ENCODE measurements at regions of chr4 and their contacts with region 1.

Region 1: DNA sequence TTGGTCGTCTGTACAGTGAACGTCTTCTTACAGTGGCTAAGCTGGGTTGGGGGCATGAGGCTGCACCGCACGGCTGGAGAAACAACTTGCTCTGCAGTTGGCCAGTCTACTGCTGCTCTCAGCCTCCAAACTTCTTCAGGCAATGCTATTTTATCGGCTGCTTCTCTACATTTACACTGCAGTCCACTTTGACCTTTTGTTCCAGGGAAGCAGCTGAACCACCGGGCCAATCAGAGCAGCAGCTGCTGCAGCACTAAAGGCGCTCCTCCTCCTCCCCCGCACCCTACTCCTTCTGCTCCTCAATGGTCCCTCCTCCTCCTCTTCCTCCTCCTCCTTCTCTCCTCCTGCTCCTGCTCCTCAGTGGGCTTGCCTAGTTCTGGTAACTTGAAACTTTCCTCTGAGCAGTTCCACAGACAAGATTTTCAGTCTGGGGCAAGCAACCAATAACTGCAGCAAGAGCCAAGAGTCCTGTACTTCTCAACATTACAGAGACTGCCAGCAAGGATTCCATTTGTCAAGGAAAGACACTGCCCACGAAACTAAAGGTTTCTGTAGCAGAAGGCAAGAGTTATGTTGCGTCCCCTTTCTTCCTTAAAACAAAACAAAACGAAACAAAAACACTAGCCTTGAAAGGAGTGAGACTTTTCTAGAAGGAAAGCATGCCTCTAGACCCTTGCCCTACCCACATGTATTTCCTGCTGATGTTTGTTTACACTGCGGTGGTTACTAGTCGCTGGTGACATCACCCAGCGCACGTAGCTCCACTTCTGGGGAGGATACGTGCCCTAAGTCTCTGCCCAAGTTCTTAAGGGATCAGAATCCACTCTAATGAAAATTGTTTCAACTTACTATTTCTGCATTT is 125.7 kb upstream of the NAP1L5 start:
- DNase-seq: peak in 1 of 2 donors; percentile 98
- H3K4me3 ChIP-seq: peak overlapping the region; percentile 42 to 56
- H3K27ac ChIP-seq: peak overlapping the region; percentile 95
- H3K4me1 ChIP-seq: peaks cover 42% of the 10 kb centered on the region
- H3K27me3 ChIP-seq: no peaks in the 10 kb centered on the region
- CTCF ChIP-seq: peak in 1 of 3 experiments; percentile 4
- POLR2A ChIP-seq: peak in 1 of 2 donors; percentile 56

Region 2: GRCh38 chr4:88523325-88524129 is 299.8 kb before region 1 on chr4 and contains the start of gene PYURF:
- intact Hi-C with region 1: loop called (anchors 10 kb)
- DNase-seq: peak in 1 of 2 donors; percentile 93
- H3K4me3 ChIP-seq: peak within 1 kb of the TSS; percentile 50 to 78
- H3K27ac ChIP-seq: peak within 1 kb of the TSS; percentile 92
- H3K4me1 ChIP-seq: peaks cover 33% of the 10 kb centered on the region
- H3K27me3 ChIP-seq: no peaks in the 10 kb centered on the region
- CTCF ChIP-seq: no peak
- POLR2A ChIP-seq: peak in 1 of 2 donors; percentile 77
- total RNA-seq, gene PYURF: 121 TPM

Region 3: DNA sequence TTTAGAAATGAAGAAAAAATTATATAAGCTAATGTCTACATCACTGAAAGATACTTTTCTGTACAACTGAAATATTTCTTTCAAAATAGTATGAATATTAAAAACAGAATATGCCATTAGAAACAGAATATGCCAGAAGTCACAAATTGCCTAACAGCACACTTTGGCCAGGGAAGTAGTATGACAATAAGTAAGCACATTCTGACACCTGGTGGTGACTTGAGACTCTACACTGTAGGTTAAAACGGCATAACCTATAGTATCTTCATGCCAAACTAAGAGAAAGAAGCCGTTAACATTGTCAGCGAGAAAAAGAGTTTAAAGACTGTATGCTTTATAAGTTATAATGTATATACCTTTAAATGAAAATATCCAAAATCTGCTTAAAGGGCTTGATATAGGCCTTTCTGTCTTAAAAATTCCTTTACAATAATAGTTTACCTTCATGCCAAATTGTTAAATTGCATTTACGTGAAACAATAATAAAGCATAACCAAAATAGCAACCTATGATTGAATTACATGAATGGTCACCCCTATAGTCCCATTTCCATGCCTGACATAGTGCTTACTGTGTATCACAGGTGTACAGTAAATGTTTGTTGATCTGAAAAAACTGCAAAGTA is 200.9 kb after region 1 on chr4:
- intact Hi-C with region 1: loop called (anchors 5 kb)
- DNase-seq: no peak
- H3K4me3 ChIP-seq: no peak overlapping the region
- H3K27ac ChIP-seq: no peak overlapping the region
- H3K4me1 ChIP-seq: no peaks in the 10 kb centered on the region
- H3K27me3 ChIP-seq: no peaks in the 10 kb centered on the region
- CTCF ChIP-seq: peak; percentile 70 to 97 (median 85)
- POLR2A ChIP-seq: no peak